ENCODE measurements at regions of chr14 and their contacts with region 1.

Region 1: DNA sequence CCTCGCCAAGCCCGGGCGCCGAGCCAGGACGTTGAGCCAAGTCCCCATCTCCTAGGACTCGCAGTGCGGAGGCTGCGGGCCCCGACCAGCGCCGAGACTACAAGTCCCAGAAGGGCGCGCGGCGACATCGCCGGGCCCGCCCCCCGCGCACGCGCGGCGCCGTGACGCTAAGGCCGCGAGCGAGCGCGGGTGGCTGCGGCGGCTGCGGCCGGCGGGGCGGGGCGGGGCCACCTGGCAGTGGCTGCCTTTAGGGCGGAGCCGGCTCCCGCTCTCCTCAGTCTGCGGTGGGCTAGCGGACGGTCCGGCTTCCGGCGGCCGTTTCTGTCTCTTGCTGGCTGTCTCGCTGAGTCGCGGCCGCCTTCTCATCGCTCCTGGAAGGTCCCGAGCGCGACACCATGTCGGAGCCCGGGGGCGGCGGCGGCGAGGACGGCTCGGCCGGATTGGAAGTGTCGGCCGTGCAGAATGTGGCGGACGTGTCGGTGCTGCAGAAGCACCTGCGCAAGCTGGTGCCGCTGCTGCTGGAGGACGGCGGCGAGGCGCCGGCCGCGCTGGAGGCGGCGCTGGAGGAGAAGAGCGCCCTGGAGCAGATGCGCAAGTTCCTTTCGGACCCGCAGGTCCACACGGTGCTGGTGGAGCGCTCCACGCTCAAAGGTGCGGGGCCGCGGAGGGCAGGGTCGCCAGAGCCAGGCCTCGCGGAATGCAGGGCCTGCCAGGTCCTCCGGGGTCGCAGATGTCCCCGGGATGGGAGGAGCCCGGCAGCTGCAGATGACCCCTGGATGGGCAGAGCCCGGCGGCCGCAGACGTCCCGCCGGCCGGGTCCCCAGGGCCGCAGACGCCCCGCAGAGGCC is at the start of gene DYNC1H1:
- DNase-seq: peak; percentile 82 to 94 (median 90)
- ATAC-seq: peak; percentile 94
- H3K4me3 ChIP-seq: peak within 1 kb of the TSS; percentile 77
- H3K4me3 Mint-ChIP-seq: peak within 1 kb of the TSS; percentile 85 to 92 (median 90)
- H3K27ac ChIP-seq: peak within 1 kb of the TSS; percentile 88
- H3K27ac Mint-ChIP-seq: peak within 1 kb of the TSS; percentile 76 to 93 (median 91)
- H3K4me1 ChIP-seq: peaks cover 20% of the 10 kb centered on the region in 2 donors
- H3K4me1 Mint-ChIP-seq: peaks cover 33 to 55% (median 50%) of the 10 kb centered on the region in 7 donors
- H3K27me3 ChIP-seq: no peaks in the 10 kb centered on the region
- H3K27me3 Mint-ChIP-seq: peaks cover 0 to 2% (median 0%) of the 10 kb centered on the region in 5 donors
- total RNA-seq, gene DYNC1H1: 252 to 310 (median 273) TPM

Region 2: GRCh38 chr14:100341301-100342031 is 1623.1 kb before region 1 on chr14:
- CTCF ChIA-PET with region 1: no interaction called
- POLR2A ChIA-PET with region 1: no interaction called
- intact Hi-C with region 1: no loop called
- DNase-seq: no peak
- ATAC-seq: peak; percentile 86
- H3K4me3 ChIP-seq: no peak overlapping the region
- H3K4me3 Mint-ChIP-seq: peak overlapping the region in 1 of 10 donors; percentile 56
- H3K27ac ChIP-seq: no peak overlapping the region
- H3K27ac Mint-ChIP-seq: peak overlapping the region in 2 of 9 donors; percentile 45 to 80
- H3K4me1 ChIP-seq: no peaks in the 10 kb centered on the region
- H3K4me1 Mint-ChIP-seq: peaks cover 0 to 32% (median 0%) of the 10 kb centered on the region in 7 donors
- H3K27me3 ChIP-seq: no peaks in the 10 kb centered on the region
- H3K27me3 Mint-ChIP-seq: no peaks in the 10 kb centered on the region

Region 3: DNA sequence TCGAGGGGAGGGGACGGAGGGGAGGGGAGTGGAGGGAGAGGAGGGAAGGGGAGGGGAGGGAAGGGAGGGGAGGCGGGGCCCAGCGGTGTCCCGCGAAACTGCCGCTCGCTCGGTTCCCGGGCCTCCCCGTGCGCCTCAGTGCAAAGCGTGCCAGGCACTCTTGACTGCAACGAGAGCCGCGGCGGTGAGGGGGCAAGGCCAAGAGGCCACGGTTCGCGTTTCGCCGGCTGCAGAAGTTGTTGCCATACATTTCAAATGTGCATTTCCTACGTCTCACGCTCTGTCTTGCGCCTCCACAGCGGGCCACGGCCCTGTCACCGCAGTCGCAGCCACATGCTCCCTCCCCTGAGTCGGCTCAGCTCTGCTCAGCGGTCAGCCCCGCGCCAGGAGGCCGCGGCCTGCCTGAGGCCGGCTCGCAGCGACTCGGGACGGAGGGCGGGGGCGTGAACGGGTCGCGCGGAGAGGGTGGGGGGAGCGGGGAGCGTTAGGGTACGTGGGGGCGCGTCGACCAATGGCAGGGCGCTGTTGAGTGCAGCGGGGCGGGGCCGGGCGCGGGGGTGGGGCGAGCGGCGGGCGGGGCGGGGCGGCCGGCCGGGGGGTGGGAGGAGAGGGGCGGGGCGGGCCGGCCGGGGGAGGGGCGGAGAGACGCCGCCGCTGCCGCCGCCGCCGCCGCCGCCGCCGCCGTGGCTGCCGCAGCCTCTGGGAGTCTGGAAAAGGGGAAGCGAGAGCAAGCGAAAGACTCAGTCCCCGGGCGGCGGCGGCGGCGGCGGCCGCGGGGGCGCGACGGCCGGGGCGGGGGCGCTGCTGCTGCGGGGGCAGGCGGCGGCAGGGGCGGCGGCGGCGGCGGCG is 203.3 kb before region 1 on chr14 and contains the start of gene PPP2R5C:
- CTCF ChIA-PET with region 1: no interaction called
- POLR2A ChIA-PET with region 1: interaction called, 4 read pairs
- intact Hi-C with region 1: loop called (anchors 1 to 5 kb)
- DNase-seq: peak; percentile 73 to 90 (median 87)
- ATAC-seq: peak; percentile 73
- H3K4me3 ChIP-seq: peak within 1 kb of the TSS; percentile 94
- H3K4me3 Mint-ChIP-seq: peak within 1 kb of the TSS; percentile 89 to 96 (median 93)
- H3K27ac ChIP-seq: peak within 1 kb of the TSS; percentile 91
- H3K27ac Mint-ChIP-seq: peak within 1 kb of the TSS; percentile 69 to 95 (median 91)
- H3K4me1 ChIP-seq: peaks cover 11 to 14% of the 10 kb centered on the region in 2 donors
- H3K4me1 Mint-ChIP-seq: peaks cover 30 to 56% (median 38%) of the 10 kb centered on the region in 7 donors
- H3K27me3 ChIP-seq: no peaks in the 10 kb centered on the region
- H3K27me3 Mint-ChIP-seq: peaks cover 0 to 11% (median 0%) of the 10 kb centered on the region in 5 donors
- total RNA-seq, gene PPP2R5C: 266 to 449 (median 405) TPM

Region 4: GRCh38 chr14:101809671-101810514 is 154.6 kb before region 1 on chr14:
- CTCF ChIA-PET with region 1: no interaction called
- POLR2A ChIA-PET with region 1: no interaction called
- intact Hi-C with region 1: loop called in 1 of 2 experiments (anchors 1 kb)
- DNase-seq: peak; percentile 57 to 97 (median 95)
- ATAC-seq: peak; percentile 94
- H3K4me3 ChIP-seq: peak overlapping the region; percentile 92
- H3K4me3 Mint-ChIP-seq: peak overlapping the region; percentile 94 to 98 (median 96)
- H3K27ac ChIP-seq: peak overlapping the region; percentile 99
- H3K27ac Mint-ChIP-seq: peak overlapping the region; percentile 90 to 100 (median 99)
- H3K4me1 ChIP-seq: peaks cover 36 to 38% of the 10 kb centered on the region in 2 donors
- H3K4me1 Mint-ChIP-seq: peaks cover 27 to 62% (median 55%) of the 10 kb centered on the region in 7 donors
- H3K27me3 ChIP-seq: no peaks in the 10 kb centered on the region
- H3K27me3 Mint-ChIP-seq: no peaks in the 10 kb centered on the region

Region 5: GRCh38 chr14:102020058-102020971 is 55.8 kb after region 1 on chr14:
- CTCF ChIA-PET with region 1: interaction called, 4 read pairs
- POLR2A ChIA-PET with region 1: no interaction called
- intact Hi-C with region 1: loop called in 1 of 2 experiments (anchors 1 kb)
- DNase-seq: peak in 8 of 9 donors; percentile 35 to 71 (median 60)
- ATAC-seq: peak; percentile 82
- H3K4me3 ChIP-seq: no peak overlapping the region
- H3K4me3 Mint-ChIP-seq: peak overlapping the region; percentile 9 to 81 (median 60)
- H3K27ac ChIP-seq: peak overlapping the region; percentile 51
- H3K27ac Mint-ChIP-seq: peak overlapping the region; percentile 76 to 94 (median 89)
- H3K4me1 ChIP-seq: peaks cover 0 to 14% of the 10 kb centered on the region in 2 donors
- H3K4me1 Mint-ChIP-seq: peaks cover 11 to 23% (median 15%) of the 10 kb centered on the region in 7 donors
- H3K27me3 ChIP-seq: no peaks in the 10 kb centered on the region
- H3K27me3 Mint-ChIP-seq: no peaks in the 10 kb centered on the region

Region 6: GRCh38 chr14:102096214-102097114 is 131.9 kb after region 1 on chr14:
- CTCF ChIA-PET with region 1: interaction called, 16 read pairs
- POLR2A ChIA-PET with region 1: no interaction called
- intact Hi-C with region 1: loop called (anchors 1 kb)
- DNase-seq: peak; percentile 35 to 66 (median 46)
- ATAC-seq: peak; percentile 77
- H3K4me3 ChIP-seq: no peak overlapping the region
- H3K4me3 Mint-ChIP-seq: no peak overlapping the region
- H3K27ac ChIP-seq: no peak overlapping the region
- H3K27ac Mint-ChIP-seq: peak overlapping the region in 4 of 9 donors; percentile 1 to 50 (median 34)
- H3K4me1 ChIP-seq: no peaks in the 10 kb centered on the region
- H3K4me1 Mint-ChIP-seq: peaks cover 3 to 12% (median 5%) of the 10 kb centered on the region in 7 donors
- H3K27me3 ChIP-seq: no peaks in the 10 kb centered on the region
- H3K27me3 Mint-ChIP-seq: no peaks in the 10 kb centered on the region

Region 7: GRCh38 chr14:102316743-102317563 is 352.4 kb after region 1 on chr14:
- CTCF ChIA-PET with region 1: interaction called, 4 read pairs
- POLR2A ChIA-PET with region 1: no interaction called
- intact Hi-C with region 1: loop called (anchors 1 kb)
- DNase-seq: peak; percentile 90 to 99 (median 95)
- ATAC-seq: peak; percentile 77
- H3K4me3 ChIP-seq: peak overlapping the region; percentile 84
- H3K4me3 Mint-ChIP-seq: peak overlapping the region; percentile 91 to 99 (median 97)
- H3K27ac ChIP-seq: peak overlapping the region; percentile 62
- H3K27ac Mint-ChIP-seq: peak overlapping the region; percentile 95 to 99 (median 98)
- H3K4me1 ChIP-seq: peaks cover 37 to 43% of the 10 kb centered on the region in 2 donors
- H3K4me1 Mint-ChIP-seq: peaks cover 34 to 76% (median 64%) of the 10 kb centered on the region in 7 donors
- H3K27me3 ChIP-seq: no peaks in the 10 kb centered on the region
- H3K27me3 Mint-ChIP-seq: peaks cover 0 to 6% (median 0%) of the 10 kb centered on the region in 5 donors

Region 8: GRCh38 chr14:102437997-102438915 is 473.7 kb after region 1 on chr14:
- CTCF ChIA-PET with region 1: no interaction called
- POLR2A ChIA-PET with region 1: no interaction called
- intact Hi-C with region 1: loop called in 1 of 2 experiments (anchors 5 kb)
- DNase-seq: peak; percentile 16 to 72 (median 49)
- ATAC-seq: peak; percentile 95
- H3K4me3 ChIP-seq: no peak overlapping the region
- H3K4me3 Mint-ChIP-seq: peak overlapping the region in 1 of 10 donors; percentile 68
- H3K27ac ChIP-seq: no peak overlapping the region
- H3K27ac Mint-ChIP-seq: no peak overlapping the region
- H3K4me1 ChIP-seq: peaks cover 0 to 5% of the 10 kb centered on the region in 2 donors
- H3K4me1 Mint-ChIP-seq: peaks cover 0 to 8% (median 0%) of the 10 kb centered on the region in 7 donors
- H3K27me3 ChIP-seq: no peaks in the 10 kb centered on the region
- H3K27me3 Mint-ChIP-seq: no peaks in the 10 kb centered on the region